Left cardiac atrium (tissue), 4 donors: ENCODE measurements at regions of chrX and their contacts with region 1.

Region 1: DNA sequence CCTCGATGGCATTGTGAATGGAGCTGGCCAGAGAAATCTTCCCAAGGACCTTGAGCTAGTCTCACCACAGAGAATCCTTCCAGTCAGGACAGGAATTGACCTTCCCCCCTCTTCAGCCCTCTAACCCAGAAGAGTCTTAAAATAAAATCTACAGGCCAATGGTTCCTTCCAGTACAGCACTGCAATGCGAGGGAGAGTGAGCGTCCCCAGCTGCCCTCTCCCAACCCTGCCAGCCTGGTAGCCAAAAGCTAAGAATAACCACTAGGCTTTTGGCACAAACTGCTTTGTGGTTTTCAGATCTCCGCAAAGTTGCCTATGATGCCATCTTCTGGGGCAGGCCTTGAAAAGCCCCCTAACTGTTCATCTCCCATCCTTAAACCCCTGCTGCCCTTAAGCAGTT is 175.1 kb downstream of the AR start:
- DNase-seq: no peak
- ATAC-seq: peak; percentile 81 to 84

Region 2: DNA sequence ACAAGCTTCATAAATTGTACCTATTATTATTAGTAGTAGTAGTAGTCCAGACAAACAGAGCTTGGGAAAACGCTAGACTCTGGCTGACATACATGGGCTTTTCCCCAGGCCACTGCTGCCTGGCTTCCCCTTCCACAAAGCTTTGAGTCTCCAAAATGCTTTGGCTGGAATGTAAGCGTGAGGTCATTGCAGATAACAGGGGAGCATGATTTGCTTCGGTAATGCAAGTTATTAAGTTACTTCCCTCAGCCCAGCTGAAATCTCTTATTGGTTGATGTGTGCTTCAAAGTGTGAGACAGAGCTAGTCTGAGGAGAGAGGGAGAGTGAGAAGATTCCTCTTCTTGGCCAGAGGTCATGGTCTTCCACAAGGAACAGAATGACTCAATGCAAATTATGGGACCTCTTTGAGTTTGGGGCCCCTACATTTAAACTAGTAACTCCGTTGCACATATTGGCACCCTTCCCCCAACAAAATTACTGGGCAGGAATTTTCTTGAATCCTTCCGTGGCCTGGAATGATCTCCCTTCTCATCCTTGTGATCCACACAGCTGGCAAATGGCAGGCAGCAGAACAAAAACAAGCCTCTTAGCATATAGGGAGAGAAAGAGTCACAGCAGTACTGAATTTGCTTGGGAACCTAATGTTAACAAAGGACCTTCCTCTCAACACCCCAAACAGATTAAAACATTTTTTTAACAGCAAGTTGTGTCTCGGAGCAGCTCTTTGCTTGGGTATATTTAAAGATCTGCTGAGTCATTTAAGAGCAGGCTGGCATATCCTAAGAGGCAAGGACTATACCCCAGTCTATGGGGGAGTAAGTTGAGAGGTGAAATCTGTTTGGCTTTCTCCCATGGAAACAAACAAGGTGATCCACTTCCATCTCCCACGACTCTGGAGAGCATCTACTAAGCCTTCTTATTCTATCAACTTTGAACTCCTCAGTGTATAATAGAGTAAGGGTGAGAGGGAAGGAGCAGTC is 155.2 kb before region 1 on chrX:
- intact Hi-C with region 1: loop called in 1 of 2 experiments (anchors 10 kb)
- DNase-seq: peak; percentile 34
- ATAC-seq: peak; percentile 78 to 94